IMR-90 (cell line): ENCODE measurements at regions of chr18 and their contacts with region 1.

Region 1: GRCh38 chr18:10065296-10065695 is 151.5 kb downstream of the VAPA start:
- DNase-seq: no peak
- ATAC-seq: no peak
- H3K4me3 ChIP-seq: no peak overlapping the region
- H3K27ac ChIP-seq: no peak overlapping the region
- H3K4me1 ChIP-seq: peaks cover 19% of the 10 kb centered on the region
- H3K27me3 ChIP-seq: no peaks in the 10 kb centered on the region
- CTCF ChIP-seq: no peak
- POLR2A ChIP-seq: no peak
- RAD21 ChIP-seq: no peak

Region 2: GRCh38 chr18:9965711-9966624 is 99.3 kb before region 1 on chr18:
- CTCF ChIA-PET with region 1: no interaction called
- POLR2A ChIA-PET with region 1: no interaction called
- dilution Hi-C with region 1: no loop called
- in situ Hi-C with region 1: no loop called
- intact Hi-C with region 1: loop called (anchors 1 kb)
- DNase-seq: peak; percentile 58
- ATAC-seq: peak; percentile 36
- H3K4me3 ChIP-seq: no peak overlapping the region
- H3K27ac ChIP-seq: no peak overlapping the region
- H3K4me1 ChIP-seq: peaks cover 7% of the 10 kb centered on the region
- H3K27me3 ChIP-seq: peaks cover 2% of the 10 kb centered on the region
- CTCF ChIP-seq: no peak
- POLR2A ChIP-seq: no peak
- RAD21 ChIP-seq: no peak

Region 3: DNA sequence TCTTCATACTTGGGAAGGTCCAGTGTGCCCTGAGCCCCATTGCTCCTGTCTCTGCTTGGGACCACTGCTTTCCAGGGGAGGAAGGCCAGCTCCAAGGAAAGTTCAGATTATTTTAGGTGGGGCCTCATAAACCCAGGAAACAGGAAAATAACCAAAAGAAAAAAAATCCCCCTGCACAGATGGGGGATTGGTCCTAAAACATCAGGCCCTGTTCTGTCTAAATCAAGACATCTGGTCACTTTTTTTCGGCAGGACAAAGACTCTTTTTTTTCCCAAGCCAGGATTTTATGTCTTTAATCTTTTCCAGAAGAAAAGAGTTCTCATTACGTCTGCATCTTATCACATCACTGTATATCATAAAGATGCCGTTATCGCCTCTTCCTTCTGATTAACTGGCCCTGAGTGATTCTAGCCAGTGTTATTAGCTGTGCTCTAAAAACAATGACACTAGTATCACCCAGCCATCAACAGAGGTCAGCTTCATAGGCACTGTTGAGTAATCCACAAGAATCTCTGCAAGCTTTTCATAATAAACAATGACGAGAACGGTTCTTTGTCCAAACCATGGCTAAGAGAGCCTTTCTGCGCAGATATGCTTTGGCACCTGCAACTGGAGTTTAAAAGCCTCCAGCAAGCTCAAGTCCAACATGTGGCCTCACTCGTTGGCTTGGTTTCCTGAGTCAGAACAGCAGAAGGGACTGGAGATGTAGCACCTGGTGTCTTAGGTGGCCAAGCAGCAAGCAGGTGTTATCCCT is 13.2 kb before region 1 on chr18:
- CTCF ChIA-PET with region 1: no interaction called
- POLR2A ChIA-PET with region 1: no interaction called
- dilution Hi-C with region 1: no loop called
- in situ Hi-C with region 1: no loop called
- intact Hi-C with region 1: no loop called
- DNase-seq: peak; percentile 99
- ATAC-seq: peak; percentile 81
- H3K4me3 ChIP-seq: no peak overlapping the region
- H3K27ac ChIP-seq: peak overlapping the region; percentile 55; the same call in 1 of the 2 replicates
- H3K4me1 ChIP-seq: peaks cover 27% of the 10 kb centered on the region
- H3K27me3 ChIP-seq: no peaks in the 10 kb centered on the region
- CTCF ChIP-seq: no peak
- POLR2A ChIP-seq: no peak
- RAD21 ChIP-seq: no peak